ENCODE measurements at regions of chr2 and their contacts with region 1.

Region 1: GRCh38 chr2:163171786-163172531 is 333.4 kb upstream of the KCNH7 start:
- DNase-seq: no peak
- H3K4me3 ChIP-seq: no peak overlapping the region
- CTCF ChIP-seq: no peak

Region 2: GRCh38 chr2:163081754-163082153 is 90.2 kb before region 1 on chr2:
- CTCF ChIA-PET with region 1: no interaction called
- POLR2A ChIA-PET with region 1: no interaction called
- DNase-seq: no peak
- H3K4me3 ChIP-seq: no peak overlapping the region
- CTCF ChIP-seq: no peak

Region 3: GRCh38 chr2:163155279-163155883 is 16.6 kb before region 1 on chr2:
- CTCF ChIA-PET with region 1: interaction called, 74 read pairs
- POLR2A ChIA-PET with region 1: no interaction called
- DNase-seq: no peak
- H3K4me3 ChIP-seq: no peak overlapping the region
- CTCF ChIP-seq: peak; percentile 53

Region 4: DNA sequence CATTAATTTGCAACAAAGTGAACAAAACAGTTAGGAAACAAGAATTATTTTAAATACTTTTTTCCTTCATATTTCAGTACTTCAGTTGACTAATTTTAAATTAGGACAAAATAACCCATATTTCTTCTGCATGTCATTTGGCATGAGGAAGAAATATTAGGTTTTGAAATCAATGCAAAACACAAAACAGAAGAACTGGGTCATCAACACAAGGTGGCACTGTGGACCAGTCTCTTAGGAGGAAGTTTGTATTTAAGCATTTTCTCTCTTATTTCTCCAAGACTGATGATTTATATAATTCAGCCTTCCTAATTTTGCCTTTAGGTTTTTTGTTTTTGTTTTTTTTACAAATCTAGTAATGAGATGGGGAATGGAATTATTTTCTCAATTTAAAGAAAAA is 19.4 kb after region 1 on chr2:
- CTCF ChIA-PET with region 1: interaction called, 14 read pairs
- POLR2A ChIA-PET with region 1: no interaction called
- DNase-seq: no peak
- H3K4me3 ChIP-seq: no peak overlapping the region
- CTCF ChIP-seq: peak; percentile 69